ENCODE measurements at regions of chr14 and their contacts with region 1.

Region 1: GRCh38 chr14:105203057-105203531 is 22.0 kb upstream of the NUDT14 start:
- DNase-seq: peak; percentile 73 to 88 (median 76)
- ATAC-seq: peak; percentile 13 to 45 (median 30)
- H3K4me3 ChIP-seq: no peak overlapping the region
- H3K27ac ChIP-seq: peak overlapping the region in 8 of 12 donors; percentile 51 to 95 (median 72)
- H3K4me1 ChIP-seq: peaks cover 0 to 98% (median 59%) of the 10 kb centered on the region in 12 donors
- H3K27me3 ChIP-seq: peaks cover 0 to 21% (median 0%) of the 10 kb centered on the region in 9 donors
- CTCF ChIP-seq: peak; percentile 86 to 97 (median 93)
- POLR2A ChIP-seq: no peak

Region 2: DNA sequence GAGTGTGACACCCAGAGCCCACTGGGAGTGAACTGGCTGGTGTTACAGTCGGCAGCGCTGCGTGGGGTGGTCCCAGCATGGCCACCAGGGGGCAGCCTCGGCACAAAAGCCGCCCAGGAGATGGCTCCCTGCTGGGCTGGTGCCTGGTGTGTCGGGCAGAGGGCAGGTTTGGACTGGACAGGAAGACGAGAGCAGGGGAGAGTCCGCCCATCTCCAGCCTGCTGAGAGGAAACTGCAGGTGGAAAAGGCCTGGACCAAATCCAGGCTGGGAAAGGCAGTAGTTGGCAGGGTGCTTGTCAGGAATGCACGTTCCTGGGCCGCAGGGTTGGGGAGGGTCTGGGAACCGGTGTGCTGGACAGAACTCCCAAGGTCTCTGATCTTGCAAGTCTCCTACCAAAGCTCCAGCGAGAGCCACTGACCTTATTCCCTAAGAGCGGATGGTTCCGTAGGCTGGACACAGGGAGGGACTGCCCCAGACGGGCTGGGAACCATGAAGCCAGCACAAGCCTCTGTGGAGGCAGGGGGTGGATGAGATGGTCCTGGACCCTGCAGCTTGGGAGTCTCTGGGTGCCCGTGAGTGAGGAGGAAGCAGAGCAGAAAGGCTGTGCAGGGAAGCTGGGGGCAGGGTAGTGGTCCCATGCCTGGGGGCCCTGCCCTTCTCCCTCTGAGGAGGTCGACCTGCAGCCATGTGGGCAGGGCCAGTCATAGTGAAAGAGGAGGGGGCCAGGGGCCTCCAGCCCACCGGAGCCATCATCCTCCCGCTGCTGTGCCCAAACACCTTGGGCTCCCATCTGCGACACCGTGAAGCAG is 226.7 kb before region 1 on chr14:
- intact Hi-C with region 1: loop called in 1 of 10 experiments (anchors 10 kb)
- DNase-seq: peak; percentile 81 to 92 (median 86)
- ATAC-seq: peak; percentile 54 to 72 (median 58)
- H3K4me3 ChIP-seq: no peak overlapping the region
- H3K27ac ChIP-seq: no peak overlapping the region
- H3K4me1 ChIP-seq: peaks cover 8 to 75% (median 44%) of the 10 kb centered on the region in 12 donors
- H3K27me3 ChIP-seq: peaks cover 0 to 20% (median 0%) of the 10 kb centered on the region in 9 donors
- CTCF ChIP-seq: peak; percentile 77 to 96 (median 92)
- POLR2A ChIP-seq: no peak

Region 3: GRCh38 chr14:105118656-105119403 is 84.3 kb before region 1 on chr14:
- intact Hi-C with region 1: no loop called
- DNase-seq: peak in 1 of 5 donors; percentile 13
- ATAC-seq: no peak
- H3K4me3 ChIP-seq: no peak overlapping the region
- H3K27ac ChIP-seq: no peak overlapping the region
- H3K4me1 ChIP-seq: no peaks in the 10 kb centered on the region
- H3K27me3 ChIP-seq: peaks cover 0 to 13% (median 0%) of the 10 kb centered on the region in 9 donors
- CTCF ChIP-seq: no peak
- POLR2A ChIP-seq: no peak

Region 4: DNA sequence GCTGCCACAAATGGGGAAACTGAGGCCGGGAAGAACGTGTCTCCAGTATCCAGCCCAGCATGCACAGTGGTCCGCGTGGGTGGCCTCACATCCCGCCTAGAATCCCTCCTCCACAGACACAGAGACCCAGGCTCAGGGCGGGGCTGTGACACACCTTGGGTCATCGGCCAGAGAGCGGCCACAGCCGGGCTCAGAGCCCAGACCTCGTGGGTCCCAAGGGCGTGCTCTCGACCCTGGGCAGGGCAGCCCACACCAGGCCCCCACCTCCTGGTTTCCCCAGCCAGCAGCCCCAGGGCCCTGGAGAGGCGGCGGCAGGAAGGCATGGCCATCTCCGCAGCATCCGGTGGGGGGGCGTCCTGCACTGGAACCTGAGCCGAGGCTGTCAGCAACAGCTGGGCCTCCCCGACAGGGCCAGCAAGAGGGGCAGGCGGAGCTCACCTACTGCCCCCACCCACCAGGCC is 49.8 kb before region 1 on chr14:
- intact Hi-C with region 1: loop called in 2 of 10 experiments (anchors 5 kb)
- DNase-seq: peak; percentile 77 to 83 (median 82)
- ATAC-seq: peak; percentile 67 to 90 (median 74)
- H3K4me3 ChIP-seq: no peak overlapping the region
- H3K27ac ChIP-seq: peak overlapping the region; percentile 48 to 88 (median 78)
- H3K4me1 ChIP-seq: peaks cover 6 to 43% (median 25%) of the 10 kb centered on the region in 12 donors
- H3K27me3 ChIP-seq: no peaks in the 10 kb centered on the region
- CTCF ChIP-seq: no peak
- POLR2A ChIP-seq: no peak

Region 5: GRCh38 chr14:105255021-105255507 is 52.0 kb after region 1 on chr14:
- intact Hi-C with region 1: loop called in 4 of 10 experiments (anchors 5 to 10 kb)
- DNase-seq: peak in 2 of 5 donors; percentile 43 to 71
- ATAC-seq: peak; percentile 49 to 80 (median 58)
- H3K4me3 ChIP-seq: no peak overlapping the region
- H3K27ac ChIP-seq: peak overlapping the region in 9 of 12 donors; percentile 31 to 69 (median 53)
- H3K4me1 ChIP-seq: peaks cover 0 to 21% (median 9%) of the 10 kb centered on the region in 12 donors
- H3K27me3 ChIP-seq: no peaks in the 10 kb centered on the region
- CTCF ChIP-seq: peak in 3 of 12 donors; percentile 9 to 33 (median 15)
- POLR2A ChIP-seq: no peak

Region 6: GRCh38 chr14:105267820-105268548 is 64.9 kb after region 1 on chr14:
- intact Hi-C with region 1: loop called in 5 of 10 experiments (anchors 5 kb)
- DNase-seq: no peak
- ATAC-seq: peak in 3 of 4 donors; percentile 74 to 79 (median 75)
- H3K4me3 ChIP-seq: no peak overlapping the region
- H3K27ac ChIP-seq: no peak overlapping the region
- H3K4me1 ChIP-seq: peaks cover 0 to 10% (median 0%) of the 10 kb centered on the region in 12 donors
- H3K27me3 ChIP-seq: no peaks in the 10 kb centered on the region
- CTCF ChIP-seq: peak in 6 of 12 donors; percentile 12 to 22 (median 19)
- POLR2A ChIP-seq: no peak

Region 7: GRCh38 chr14:105351920-105352851 is 149.1 kb after region 1 on chr14:
- intact Hi-C with region 1: loop called (anchors 1 to 5 kb)
- DNase-seq: peak; percentile 80 to 85 (median 82)
- ATAC-seq: peak; percentile 81 to 91 (median 85)
- H3K4me3 ChIP-seq: no peak overlapping the region
- H3K27ac ChIP-seq: peak overlapping the region in 4 of 12 donors; percentile 22 to 59 (median 48)
- H3K4me1 ChIP-seq: peaks cover 0 to 8% (median 5%) of the 10 kb centered on the region in 12 donors
- H3K27me3 ChIP-seq: no peaks in the 10 kb centered on the region
- CTCF ChIP-seq: peak; percentile 73 to 90 (median 82)
- POLR2A ChIP-seq: no peak

Region 8: GRCh38 chr14:105627711-105628110 is 424.6 kb after region 1 on chr14:
- intact Hi-C with region 1: no loop called
- DNase-seq: no peak
- ATAC-seq: no peak
- H3K4me3 ChIP-seq: no peak overlapping the region
- H3K27ac ChIP-seq: no peak overlapping the region
- H3K4me1 ChIP-seq: no peaks in the 10 kb centered on the region
- H3K27me3 ChIP-seq: peaks cover 0 to 4% (median 0%) of the 10 kb centered on the region in 9 donors
- CTCF ChIP-seq: no peak
- POLR2A ChIP-seq: no peak